ENCODE measurements at regions of chr3 and their contacts with region 1.

Region 1: DNA sequence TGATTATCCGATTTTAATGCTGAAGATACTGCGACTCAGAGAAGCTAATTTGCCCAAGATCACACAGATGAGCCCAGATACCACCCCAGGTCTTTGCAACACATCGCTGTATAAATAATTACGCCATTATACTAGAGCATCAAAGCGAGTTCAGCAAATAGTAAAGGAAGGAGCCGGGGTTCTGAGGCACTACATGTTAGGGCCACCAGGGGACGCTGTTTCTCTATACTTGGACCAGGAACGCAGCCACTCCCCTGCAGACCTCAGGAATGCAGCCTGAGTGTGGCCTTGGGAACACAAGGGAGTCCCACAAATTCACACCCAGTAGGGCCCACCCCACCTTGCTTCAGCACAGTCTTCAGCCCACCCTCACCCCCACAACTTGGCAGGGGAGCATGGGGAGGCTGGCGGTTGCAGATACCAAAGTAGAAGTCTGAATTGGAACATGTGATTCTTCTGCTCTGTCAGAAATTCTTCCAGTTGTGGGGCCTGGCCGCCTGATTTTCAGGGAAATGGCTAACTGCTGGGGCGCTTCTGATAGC is 57.8 kb upstream of the RYK start:
- DNase-seq: peak; percentile 76 to 87
- ATAC-seq: peak; percentile 61

Region 2: DNA sequence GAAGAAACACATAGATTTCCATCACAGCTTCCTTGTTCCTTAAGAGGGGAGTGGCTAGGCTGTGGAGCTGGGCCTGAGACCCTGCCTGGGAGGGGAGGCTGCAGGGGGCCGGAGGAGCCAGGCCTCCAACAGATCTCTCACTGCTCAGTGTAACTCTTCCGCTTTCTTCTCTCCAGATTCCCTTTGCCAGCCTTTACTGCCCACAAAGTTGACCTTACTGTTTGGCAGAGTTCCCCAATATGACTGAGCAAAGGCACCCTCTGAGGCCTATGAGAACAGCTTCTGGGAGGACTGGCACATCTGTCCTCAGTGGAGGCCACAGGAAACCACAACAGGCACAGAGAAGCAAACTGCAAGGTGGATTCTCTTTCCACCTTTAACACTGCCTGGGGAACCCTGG is 316.8 kb before region 1 on chr3:
- intact Hi-C with region 1: no loop called
- DNase-seq: no peak
- ATAC-seq: no peak

Region 3: DNA sequence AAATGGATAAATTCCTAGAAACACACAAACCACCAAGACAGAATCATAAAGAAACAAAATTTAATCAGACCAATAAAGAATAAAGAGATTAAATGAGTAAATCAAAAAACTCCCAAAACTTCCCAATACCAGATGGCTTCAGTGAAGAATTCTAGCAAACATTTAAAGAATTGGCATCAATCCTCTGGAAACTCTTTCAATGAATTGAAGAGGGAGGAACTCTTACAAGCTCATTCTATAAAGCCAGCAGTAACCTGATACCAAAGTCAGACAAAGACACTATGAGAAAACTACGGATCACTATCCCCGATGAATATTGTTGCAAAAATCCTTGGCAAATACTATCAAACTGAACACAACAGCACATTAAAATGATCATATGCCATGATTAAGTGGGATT is 196.8 kb before region 1 on chr3:
- intact Hi-C with region 1: no loop called
- DNase-seq: no peak
- ATAC-seq: no peak

Region 4: DNA sequence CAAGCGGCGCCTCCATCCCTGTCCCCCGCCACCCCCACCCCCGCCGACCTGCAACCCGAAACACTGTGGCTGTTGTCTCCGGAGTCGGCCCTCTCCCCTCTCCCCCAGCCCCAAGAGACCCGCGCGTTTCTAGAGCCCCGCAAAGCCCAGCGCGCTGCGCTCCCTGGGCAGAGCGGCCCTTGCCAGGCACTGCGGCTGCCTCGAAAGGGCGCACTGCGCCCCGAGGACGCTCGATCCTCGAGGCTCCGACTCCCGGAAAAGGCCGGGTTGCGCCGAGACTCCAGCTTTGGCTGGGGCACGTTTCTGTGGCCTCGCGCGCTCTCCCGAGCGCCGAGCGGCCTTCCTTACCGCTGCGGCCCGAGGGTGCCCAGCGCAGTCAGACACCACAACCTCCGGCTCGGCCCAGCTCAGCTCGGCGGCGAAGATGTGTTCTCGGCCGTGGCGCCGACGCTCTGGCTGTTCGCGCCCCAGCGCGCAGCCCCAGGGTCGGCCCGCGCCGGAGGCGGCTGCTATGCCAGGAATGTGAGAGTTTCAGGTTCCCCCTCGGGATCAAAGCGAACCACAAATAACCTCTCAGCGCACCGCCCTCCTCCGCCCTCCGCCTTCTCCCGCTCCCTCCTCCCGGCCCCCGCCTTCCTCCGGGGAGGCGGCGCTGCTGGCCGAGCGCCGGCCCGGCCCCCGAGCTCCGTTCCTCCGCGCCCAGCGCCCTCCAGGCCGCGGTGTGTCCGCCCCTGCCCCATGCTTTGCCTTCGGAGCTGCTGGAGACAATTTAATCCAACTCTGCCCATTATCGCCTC is 65.8 kb after region 1 on chr3 and contains the start of gene AMOTL2:
- intact Hi-C with region 1: loop called in 1 of 2 experiments (anchors 2 kb)
- DNase-seq: peak; percentile 81 to 86
- ATAC-seq: peak; percentile 74
- total RNA-seq, gene AMOTL2: 17.6 to 18.7 TPM

Region 5: GRCh38 chr3:134464698-134465365 is 156.4 kb after region 1 on chr3:
- intact Hi-C with region 1: loop called (anchors 5 kb)
- DNase-seq: no peak
- ATAC-seq: no peak

Region 6: GRCh38 chr3:134607054-134608022 is 298.9 kb after region 1 on chr3:
- intact Hi-C with region 1: no loop called
- DNase-seq: no peak
- ATAC-seq: no peak